ENCODE measurements at regions of chr11 and their contacts with region 1.

Region 1: DNA sequence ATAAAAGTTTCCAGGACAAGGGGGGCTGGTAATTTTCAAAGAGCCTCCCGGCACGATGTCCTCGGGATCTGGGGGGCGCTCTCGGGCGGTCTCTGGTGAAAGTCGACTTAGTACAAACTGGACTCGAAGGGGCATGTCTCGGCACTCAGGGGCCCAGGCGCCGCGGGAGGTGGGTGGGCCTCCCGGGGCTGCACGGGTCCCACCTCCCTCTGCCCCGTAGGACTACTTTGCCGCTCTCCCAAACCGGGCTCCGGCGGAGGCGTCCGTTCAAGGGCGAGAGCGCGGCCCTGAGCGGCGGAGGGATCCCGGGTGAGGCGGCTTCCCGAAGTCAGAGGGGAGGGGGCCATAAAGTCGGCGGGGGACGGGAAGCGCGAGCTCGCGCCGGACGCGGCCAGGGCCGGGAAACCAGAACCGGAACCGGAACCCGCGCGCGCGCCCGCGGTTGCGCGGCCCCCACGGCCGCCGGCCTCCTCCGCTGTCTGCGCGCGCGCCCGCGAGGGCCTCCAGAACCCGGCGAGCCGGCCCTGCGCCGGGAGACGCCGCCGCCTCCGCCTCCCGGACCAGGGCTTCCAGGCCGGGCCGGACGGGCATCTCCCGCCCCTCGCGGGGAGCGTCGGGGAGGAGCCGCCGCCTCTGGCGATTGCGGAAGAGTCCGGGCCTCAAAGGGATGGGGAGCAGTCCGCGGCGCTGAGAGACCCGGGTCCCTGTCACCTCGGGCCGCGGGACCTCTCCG is at the start of gene ARHGEF12:
- DNase-seq: peak; percentile 92
- H3K4me3 Mint-ChIP-seq: peak within 1 kb of the TSS; percentile 96
- H3K27ac Mint-ChIP-seq: peak within 1 kb of the TSS; percentile 87
- H3K4me1 Mint-ChIP-seq: peaks cover 30% of the 10 kb centered on the region
- H3K27me3 Mint-ChIP-seq: peaks cover 52% of the 10 kb centered on the region
- total RNA-seq, gene ARHGEF12: 20.0 and 20.3 TPM in 2 replicates

Region 2: DNA sequence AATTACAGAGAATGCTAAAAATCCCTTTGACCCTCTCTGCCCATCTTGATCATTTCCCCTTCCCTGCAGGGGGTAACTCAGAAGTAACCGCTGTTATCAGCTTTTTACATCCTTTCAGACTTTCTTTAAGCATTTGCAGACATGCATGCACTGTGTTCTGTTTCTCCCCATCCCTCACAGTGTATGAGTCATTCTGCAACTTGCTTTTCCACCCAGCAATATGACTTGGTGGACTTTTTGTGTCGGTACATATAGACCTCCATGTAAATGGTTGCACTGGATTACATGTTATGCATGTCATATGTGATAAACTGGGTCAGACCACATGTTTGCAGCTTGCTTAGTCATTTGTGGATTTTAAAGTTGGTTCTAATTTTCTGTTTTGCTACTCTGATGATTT is 519.4 kb before region 1 on chr11:
- intact Hi-C with region 1: no loop called
- DNase-seq: no peak
- H3K4me3 Mint-ChIP-seq: no peak overlapping the region
- H3K27ac Mint-ChIP-seq: no peak overlapping the region
- H3K4me1 Mint-ChIP-seq: no peaks in the 10 kb centered on the region
- H3K27me3 Mint-ChIP-seq: peaks cover 7% of the 10 kb centered on the region

Region 3: GRCh38 chr11:120432056-120433018 is 96.3 kb after region 1 on chr11:
- intact Hi-C with region 1: loop called (anchors 2 kb)
- DNase-seq: peak; percentile 55
- H3K4me3 Mint-ChIP-seq: no peak overlapping the region
- H3K27ac Mint-ChIP-seq: peak overlapping the region; percentile 80
- H3K4me1 Mint-ChIP-seq: peaks cover 16% of the 10 kb centered on the region
- H3K27me3 Mint-ChIP-seq: no peaks in the 10 kb centered on the region

Region 4: DNA sequence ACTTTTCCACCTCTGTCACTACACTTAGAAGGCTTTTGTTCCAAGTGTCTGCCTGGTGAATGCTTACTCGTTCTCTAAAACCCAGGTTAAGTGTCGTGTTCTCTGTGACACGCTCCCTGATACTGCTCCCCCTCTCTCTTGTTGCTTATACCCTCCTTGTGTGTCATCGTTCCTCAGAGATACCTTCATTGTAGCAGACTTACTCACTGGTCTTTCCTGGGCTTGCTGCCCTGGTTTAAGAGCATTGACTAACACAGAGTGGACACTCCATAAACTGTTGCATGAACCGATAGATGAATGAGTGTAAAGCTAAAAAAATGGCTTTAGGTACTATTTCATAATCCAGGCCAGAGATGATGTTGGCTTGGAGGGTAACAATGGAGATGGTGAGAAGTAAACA is 346.8 kb after region 1 on chr11:
- intact Hi-C with region 1: loop called (anchors 1 kb)
- DNase-seq: no peak
- H3K4me3 Mint-ChIP-seq: no peak overlapping the region
- H3K27ac Mint-ChIP-seq: no peak overlapping the region
- H3K4me1 Mint-ChIP-seq: no peaks in the 10 kb centered on the region
- H3K27me3 Mint-ChIP-seq: peaks cover 9% of the 10 kb centered on the region

Region 5: GRCh38 chr11:120801801-120802689 is 466.0 kb after region 1 on chr11:
- intact Hi-C with region 1: loop called (anchors 10 kb)
- DNase-seq: peak; percentile 83
- H3K4me3 Mint-ChIP-seq: no peak overlapping the region
- H3K27ac Mint-ChIP-seq: peak overlapping the region; percentile 69
- H3K4me1 Mint-ChIP-seq: no peaks in the 10 kb centered on the region
- H3K27me3 Mint-ChIP-seq: peaks cover 2% of the 10 kb centered on the region

Region 6: DNA sequence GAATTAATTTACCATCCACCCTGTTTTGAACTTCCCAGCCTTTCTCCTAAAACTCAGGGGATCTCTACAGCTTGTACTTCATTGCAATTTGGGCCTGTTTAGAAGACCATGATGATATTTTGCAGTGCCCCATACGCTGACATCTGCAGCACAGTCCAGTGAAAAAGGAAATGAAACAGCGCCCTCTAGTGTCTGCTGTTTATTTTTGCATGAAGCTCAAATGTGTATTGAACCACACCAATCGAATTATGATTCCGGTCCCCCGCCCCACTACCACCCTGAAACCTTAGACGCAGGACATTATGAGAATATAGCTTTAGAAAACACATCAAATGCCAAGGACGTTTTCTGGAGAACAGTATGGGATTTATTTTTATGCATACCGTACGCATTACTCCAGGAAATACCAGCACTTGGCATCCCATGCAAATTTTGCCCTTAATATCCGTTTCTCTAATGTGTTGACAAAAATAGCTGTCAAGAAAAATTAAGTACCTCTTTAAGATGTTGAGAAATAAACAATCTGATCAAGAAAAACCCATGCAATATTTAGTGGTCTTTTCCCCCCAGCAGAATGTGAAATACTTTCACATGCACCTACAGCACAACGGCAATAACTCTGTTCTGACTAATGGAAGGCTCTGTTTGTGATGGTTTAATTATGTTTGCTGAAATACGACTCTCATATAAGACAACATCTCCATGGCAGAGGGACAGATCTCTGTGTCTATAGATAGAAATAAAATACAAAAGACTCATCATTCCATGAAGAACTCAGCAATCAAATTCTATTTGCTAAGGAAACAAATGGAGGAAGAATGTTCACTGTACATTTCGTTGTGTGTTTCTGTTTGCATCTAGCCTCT is 858.9 kb after region 1 on chr11:
- intact Hi-C with region 1: loop called (anchors 10 kb)
- DNase-seq: peak; percentile 89
- H3K4me3 Mint-ChIP-seq: no peak overlapping the region
- H3K27ac Mint-ChIP-seq: no peak overlapping the region
- H3K4me1 Mint-ChIP-seq: no peaks in the 10 kb centered on the region
- H3K27me3 Mint-ChIP-seq: peaks cover 22% of the 10 kb centered on the region

Measured in activated CD4-positive, alpha-beta T cell treated with anti-CD3 and anti-CD28 coated beads, Interleukin-2, amount 10 ng/mL, durations not matched to agents 24 days and 14 days (primary cell).